ENCODE measurements at regions of chr12 and their contacts with region 1.

Region 1: GRCh38 chr12:123150744-123151456 is at the start of gene PITPNM2:
- DNase-seq: peak; percentile 78
- H3K4me3 ChIP-seq: peak within 1 kb of the TSS; percentile 54 to 86 (median 82)
- H3K27ac ChIP-seq: peak within 1 kb of the TSS; percentile 88 to 95 (median 92)
- H3K4me1 ChIP-seq: peaks cover 0 to 33% (median 28%) of the 10 kb centered on the region in 4 donors
- H3K27me3 ChIP-seq: no peaks in the 10 kb centered on the region
- CTCF ChIP-seq: peak in 1 of 4 experiments; percentile 33
- EP300 ChIP-seq: no peak
- POLR2A ChIP-seq: no peak
- total RNA-seq, gene PITPNM2: 6.4 to 19.5 (median 11.7) TPM

Region 2: DNA sequence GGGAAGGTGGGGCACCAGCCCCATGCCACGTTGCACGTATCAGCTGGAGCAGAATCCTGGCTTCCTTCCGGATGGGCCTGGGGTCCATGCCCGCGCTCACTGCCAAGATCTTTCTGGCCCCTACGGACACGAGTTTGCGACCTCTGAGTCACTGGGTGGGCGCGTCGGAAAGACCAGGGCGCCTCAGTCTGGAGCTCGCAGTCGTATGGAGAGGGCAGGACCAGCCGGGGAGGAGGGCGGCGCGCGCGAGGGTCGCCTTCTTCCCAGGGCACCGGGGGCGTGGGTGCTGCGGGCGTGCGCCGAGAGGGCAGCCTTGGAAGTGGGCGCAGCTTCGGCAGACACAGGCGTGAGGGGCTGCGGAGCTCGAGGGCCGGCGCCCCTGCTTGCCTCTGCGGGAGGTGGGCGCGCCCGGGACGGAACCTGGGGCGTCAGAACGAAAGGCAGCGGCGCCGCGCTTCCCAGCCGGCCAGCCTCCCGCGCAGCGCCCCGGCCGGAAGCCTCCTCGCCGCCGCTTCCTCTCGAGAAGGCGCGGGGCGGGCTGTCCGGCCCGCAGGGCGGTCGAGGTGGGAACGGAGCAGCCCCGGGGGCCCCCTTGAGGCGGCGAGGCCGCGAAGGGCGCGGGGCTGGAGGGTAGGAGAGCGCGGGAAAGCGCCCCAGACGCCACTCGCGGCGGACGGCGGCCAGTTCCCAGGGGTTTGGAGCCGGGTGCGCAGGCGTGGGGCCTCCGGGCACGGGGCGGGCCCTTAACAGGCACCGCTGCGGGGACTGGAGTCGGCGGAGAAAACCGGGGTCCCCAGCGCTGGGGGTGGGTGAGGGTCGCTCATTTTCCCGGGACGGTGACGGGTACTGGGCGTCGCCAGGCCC is 170.5 kb before region 1 on chr12 and contains the start of gene ARL6IP4:
- intact Hi-C with region 1: loop called (anchors 5 kb)
- DNase-seq: no peak
- H3K4me3 ChIP-seq: peak within 1 kb of the TSS; percentile 72 to 100 (median 96)
- H3K27ac ChIP-seq: peak within 1 kb of the TSS; percentile 87 to 97 (median 94)
- H3K4me1 ChIP-seq: peaks cover 0 to 88% (median 82%) of the 10 kb centered on the region in 4 donors
- H3K27me3 ChIP-seq: no peaks in the 10 kb centered on the region
- CTCF ChIP-seq: no peak
- EP300 ChIP-seq: no peak
- POLR2A ChIP-seq: peak; percentile 24 to 38
- total RNA-seq, gene ARL6IP4: 211 to 358 (median 327) TPM

Region 3: GRCh38 chr12:123043536-123044001 is 107.3 kb before region 1 on chr12:
- intact Hi-C with region 1: loop called (anchors 1 kb)
- DNase-seq: peak; percentile 95
- H3K4me3 ChIP-seq: no peak overlapping the region
- H3K27ac ChIP-seq: peak overlapping the region; percentile 63 to 82 (median 76)
- H3K4me1 ChIP-seq: peaks cover 0 to 69% (median 51%) of the 10 kb centered on the region in 4 donors
- H3K27me3 ChIP-seq: no peaks in the 10 kb centered on the region
- CTCF ChIP-seq: peak; percentile 71 to 89 (median 80)
- EP300 ChIP-seq: no peak
- POLR2A ChIP-seq: no peak

Region 4: DNA sequence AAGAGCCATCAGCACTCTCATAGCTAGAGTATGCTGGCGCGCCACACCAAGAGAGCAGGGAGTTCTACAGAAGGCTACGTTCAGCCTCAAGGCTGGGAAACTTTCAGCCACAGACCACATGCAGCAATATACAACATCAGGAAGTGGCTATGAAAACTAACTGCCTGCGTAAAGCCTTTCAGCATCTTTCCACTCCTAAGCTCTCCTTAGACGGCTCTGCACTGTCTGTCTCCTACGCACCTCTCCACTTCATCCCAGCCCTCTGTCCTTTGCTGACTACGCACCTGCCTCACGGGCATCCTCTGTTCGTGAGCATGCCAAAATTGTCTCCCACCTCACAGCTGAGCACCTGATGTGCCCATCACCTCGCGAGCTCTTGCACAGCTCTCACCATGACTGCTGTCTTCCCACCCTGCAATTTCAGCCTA is 72.4 kb after region 1 on chr12:
- intact Hi-C with region 1: no loop called
- DNase-seq: no peak
- H3K4me3 ChIP-seq: no peak overlapping the region
- H3K27ac ChIP-seq: no peak overlapping the region
- H3K4me1 ChIP-seq: no peaks in the 10 kb centered on the region
- H3K27me3 ChIP-seq: no peaks in the 10 kb centered on the region
- CTCF ChIP-seq: no peak
- EP300 ChIP-seq: no peak
- POLR2A ChIP-seq: no peak